Naive thymus-derived CD4-positive, alpha-beta T cell (primary cell): ENCODE measurements at regions of chr19 and their contacts with region 1.

Region 1: GRCh38 chr19:48646001-48646721 is at the start of gene CA11:
- DNase-seq: peak; percentile 89 to 97 (median 93)
- ATAC-seq: peak; percentile 94
- H3K4me3 ChIP-seq: peak within 1 kb of the TSS; percentile 94
- H3K4me3 Mint-ChIP-seq: peak within 1 kb of the TSS; percentile 86 to 99 (median 94)
- H3K27ac ChIP-seq: peak within 1 kb of the TSS; percentile 79
- H3K27ac Mint-ChIP-seq: peak within 1 kb of the TSS; percentile 87 to 98 (median 94)
- H3K4me1 ChIP-seq: peaks cover 21% of the 10 kb centered on the region in 2 donors
- H3K4me1 Mint-ChIP-seq: peaks cover 25 to 60% (median 44%) of the 10 kb centered on the region in 7 donors
- H3K27me3 ChIP-seq: no peaks in the 10 kb centered on the region
- H3K27me3 Mint-ChIP-seq: peaks cover 0 to 8% (median 0%) of the 10 kb centered on the region in 5 donors
- total RNA-seq, gene CA11: 7.5 to 20.5 (median 12.5) TPM

Region 2: GRCh38 chr19:48230555-48231129 is 415.5 kb before region 1 on chr19:
- CTCF ChIA-PET with region 1: no interaction called
- POLR2A ChIA-PET with region 1: no interaction called
- intact Hi-C with region 1: no loop called
- DNase-seq: no peak
- ATAC-seq: peak; percentile 37
- H3K4me3 ChIP-seq: no peak overlapping the region
- H3K4me3 Mint-ChIP-seq: no peak overlapping the region
- H3K27ac ChIP-seq: no peak overlapping the region
- H3K27ac Mint-ChIP-seq: peak overlapping the region in 4 of 9 donors; percentile 4 to 69 (median 54)
- H3K4me1 ChIP-seq: no peaks in the 10 kb centered on the region
- H3K4me1 Mint-ChIP-seq: peaks cover 3 to 23% (median 7%) of the 10 kb centered on the region in 7 donors
- H3K27me3 ChIP-seq: no peaks in the 10 kb centered on the region
- H3K27me3 Mint-ChIP-seq: no peaks in the 10 kb centered on the region

Region 3: DNA sequence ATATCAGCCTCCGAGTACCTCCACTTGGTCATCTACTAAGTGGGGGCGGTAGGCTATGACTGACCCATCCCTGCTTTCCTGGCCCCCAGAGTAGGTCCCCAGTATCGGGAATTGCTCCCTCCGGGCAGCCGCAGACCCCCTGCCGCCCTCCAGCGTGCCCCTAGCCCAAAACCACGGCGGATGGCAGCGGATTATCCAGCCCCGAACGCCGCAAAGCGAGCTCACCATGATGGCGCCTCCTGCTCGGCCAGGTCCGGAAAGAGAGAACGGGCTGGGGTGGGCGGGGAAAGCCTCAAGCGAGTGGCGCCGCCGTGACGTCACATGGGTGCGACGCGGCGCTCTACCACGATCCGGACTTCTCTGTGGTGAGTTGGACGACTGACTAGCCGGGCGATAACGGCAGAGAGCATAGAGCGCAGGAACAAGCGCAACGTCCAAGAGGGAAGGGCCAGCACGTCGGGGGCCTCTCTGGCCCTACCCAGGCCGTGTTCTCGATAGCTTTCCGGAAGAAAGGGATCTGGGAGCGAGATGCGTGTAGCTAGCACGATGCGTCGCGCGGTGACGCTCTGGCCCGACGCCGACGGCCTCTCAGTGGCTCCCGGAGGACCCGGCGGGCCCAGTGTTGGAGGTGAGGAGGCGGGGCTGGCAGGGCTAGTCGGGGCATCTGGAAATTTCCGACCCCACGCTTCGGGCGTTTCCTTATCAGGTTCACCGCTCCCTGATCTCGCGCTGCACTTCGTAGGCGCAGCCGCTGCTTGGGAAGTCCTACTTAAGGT is 27.1 kb before region 1 on chr19 and contains the starts of genes RPL18 and SPHK2:
- CTCF ChIA-PET with region 1: interaction called, 6 read pairs
- POLR2A ChIA-PET with region 1: interaction called, 19 read pairs
- intact Hi-C with region 1: loop called in 1 of 2 experiments (anchors 1 kb)
- DNase-seq: peak; percentile 89 to 97 (median 95)
- ATAC-seq: peak; percentile 89
- H3K4me3 ChIP-seq: peak within 1 kb of the TSS; percentile 96
- H3K4me3 Mint-ChIP-seq: peak within 1 kb of the TSS; percentile 88 to 99 (median 96)
- H3K27ac ChIP-seq: peak within 1 kb of the TSS; percentile 95
- H3K27ac Mint-ChIP-seq: peak within 1 kb of the TSS; percentile 96 to 99 (median 98)
- H3K4me1 ChIP-seq: peaks cover 26 to 45% of the 10 kb centered on the region in 2 donors
- H3K4me1 Mint-ChIP-seq: peaks cover 40 to 64% (median 54%) of the 10 kb centered on the region in 7 donors
- H3K27me3 ChIP-seq: no peaks in the 10 kb centered on the region
- H3K27me3 Mint-ChIP-seq: no peaks in the 10 kb centered on the region
- total RNA-seq, gene RPL18: 1,570 to 2,826 (median 2,745) TPM
- total RNA-seq, gene SPHK2: 20.1 to 34.7 (median 30.5) TPM

Region 4: DNA sequence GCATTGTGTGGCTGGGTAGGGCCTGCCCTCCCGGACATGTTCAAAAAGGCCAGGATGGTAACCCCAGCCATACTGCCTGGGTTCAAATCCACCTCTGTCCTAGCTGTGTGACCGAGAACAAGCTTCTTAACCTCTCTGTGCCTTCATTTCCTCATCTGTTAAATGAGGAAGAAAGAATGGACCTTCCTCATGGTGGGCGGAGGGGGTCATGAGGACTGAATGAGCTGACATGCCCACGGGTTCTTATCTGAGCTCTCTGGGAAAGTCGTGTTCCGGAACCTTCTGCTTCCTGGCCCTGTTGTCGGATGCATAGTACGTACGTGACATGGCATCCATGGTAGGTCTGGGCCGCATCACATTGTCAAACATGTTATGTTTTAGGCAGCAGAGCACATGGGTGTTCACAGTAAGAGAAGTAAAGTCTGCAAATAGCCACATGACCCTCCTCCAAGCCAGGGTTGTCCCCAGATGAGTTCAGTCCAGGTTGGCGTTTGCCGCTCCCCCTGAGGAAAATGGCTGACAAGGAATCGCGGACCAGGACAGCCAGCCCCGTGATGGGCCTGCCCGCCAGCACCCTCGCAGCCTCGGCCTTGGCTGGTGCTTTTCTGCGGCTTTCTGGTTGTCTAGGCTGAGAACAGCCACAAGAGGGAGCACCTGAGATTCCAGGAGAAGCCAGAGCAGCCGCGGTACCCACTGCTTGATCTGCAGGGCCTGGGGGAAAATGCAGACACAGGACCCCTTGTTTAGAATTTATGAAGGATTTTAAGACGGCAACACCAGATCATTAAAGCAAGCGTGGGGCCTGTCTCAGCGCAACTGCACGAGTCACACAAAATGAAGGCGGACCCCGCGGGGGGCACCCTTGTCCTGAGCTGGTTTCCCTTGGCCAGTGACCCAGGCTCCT is 29.0 kb after region 1 on chr19:
- CTCF ChIA-PET with region 1: interaction called, 43 read pairs
- POLR2A ChIA-PET with region 1: interaction called, 14 read pairs
- intact Hi-C with region 1: loop called (anchors 1 kb)
- DNase-seq: peak; percentile 57 to 81 (median 72)
- ATAC-seq: peak; percentile 94
- H3K4me3 ChIP-seq: no peak overlapping the region
- H3K4me3 Mint-ChIP-seq: peak overlapping the region in 1 of 10 donors; percentile 47
- H3K27ac ChIP-seq: no peak overlapping the region
- H3K27ac Mint-ChIP-seq: peak overlapping the region in 7 of 9 donors; percentile 11 to 79 (median 49)
- H3K4me1 ChIP-seq: peaks cover 6 to 7% of the 10 kb centered on the region in 2 donors
- H3K4me1 Mint-ChIP-seq: peaks cover 3 to 8% (median 7%) of the 10 kb centered on the region in 7 donors
- H3K27me3 ChIP-seq: no peaks in the 10 kb centered on the region
- H3K27me3 Mint-ChIP-seq: no peaks in the 10 kb centered on the region

Region 5: GRCh38 chr19:48795055-48795684 is 149.0 kb after region 1 on chr19:
- CTCF ChIA-PET with region 1: interaction called, 9 read pairs
- POLR2A ChIA-PET with region 1: interaction called, 4 read pairs
- intact Hi-C with region 1: loop called in 1 of 2 experiments (anchors 1 kb)
- DNase-seq: peak; percentile 72 to 87 (median 84)
- ATAC-seq: peak; percentile 99
- H3K4me3 ChIP-seq: peak overlapping the region; percentile 96
- H3K4me3 Mint-ChIP-seq: peak overlapping the region; percentile 74 to 99 (median 94)
- H3K27ac ChIP-seq: peak overlapping the region; percentile 67
- H3K27ac Mint-ChIP-seq: peak overlapping the region; percentile 83 to 95 (median 93)
- H3K4me1 ChIP-seq: peaks cover 4 to 6% of the 10 kb centered on the region in 2 donors
- H3K4me1 Mint-ChIP-seq: peaks cover 5 to 13% (median 7%) of the 10 kb centered on the region in 7 donors
- H3K27me3 ChIP-seq: no peaks in the 10 kb centered on the region
- H3K27me3 Mint-ChIP-seq: no peaks in the 10 kb centered on the region

Region 6: GRCh38 chr19:48872182-48872883 is 226.2 kb after region 1 on chr19 and contains the start of gene PPP1R15A:
- CTCF ChIA-PET with region 1: no interaction called
- POLR2A ChIA-PET with region 1: interaction called, 3 read pairs
- intact Hi-C with region 1: loop called in 1 of 2 experiments (anchors 2 kb)
- DNase-seq: peak; percentile 96 to 99 (median 98)
- ATAC-seq: peak; percentile 58
- H3K4me3 ChIP-seq: peak within 1 kb of the TSS; percentile 86
- H3K4me3 Mint-ChIP-seq: peak within 1 kb of the TSS; percentile 94 to 100 (median 98)
- H3K27ac ChIP-seq: peak within 1 kb of the TSS; percentile 99
- H3K27ac Mint-ChIP-seq: peak within 1 kb of the TSS; percentile 94 to 100 (median 99)
- H3K4me1 ChIP-seq: peaks cover 34 to 36% of the 10 kb centered on the region in 2 donors
- H3K4me1 Mint-ChIP-seq: peaks cover 31 to 51% (median 41%) of the 10 kb centered on the region in 7 donors
- H3K27me3 ChIP-seq: no peaks in the 10 kb centered on the region
- H3K27me3 Mint-ChIP-seq: peaks cover 0 to 14% (median 0%) of the 10 kb centered on the region in 5 donors
- total RNA-seq, gene PPP1R15A: 31.5 to 1,030 (median 71.9) TPM

Region 7: DNA sequence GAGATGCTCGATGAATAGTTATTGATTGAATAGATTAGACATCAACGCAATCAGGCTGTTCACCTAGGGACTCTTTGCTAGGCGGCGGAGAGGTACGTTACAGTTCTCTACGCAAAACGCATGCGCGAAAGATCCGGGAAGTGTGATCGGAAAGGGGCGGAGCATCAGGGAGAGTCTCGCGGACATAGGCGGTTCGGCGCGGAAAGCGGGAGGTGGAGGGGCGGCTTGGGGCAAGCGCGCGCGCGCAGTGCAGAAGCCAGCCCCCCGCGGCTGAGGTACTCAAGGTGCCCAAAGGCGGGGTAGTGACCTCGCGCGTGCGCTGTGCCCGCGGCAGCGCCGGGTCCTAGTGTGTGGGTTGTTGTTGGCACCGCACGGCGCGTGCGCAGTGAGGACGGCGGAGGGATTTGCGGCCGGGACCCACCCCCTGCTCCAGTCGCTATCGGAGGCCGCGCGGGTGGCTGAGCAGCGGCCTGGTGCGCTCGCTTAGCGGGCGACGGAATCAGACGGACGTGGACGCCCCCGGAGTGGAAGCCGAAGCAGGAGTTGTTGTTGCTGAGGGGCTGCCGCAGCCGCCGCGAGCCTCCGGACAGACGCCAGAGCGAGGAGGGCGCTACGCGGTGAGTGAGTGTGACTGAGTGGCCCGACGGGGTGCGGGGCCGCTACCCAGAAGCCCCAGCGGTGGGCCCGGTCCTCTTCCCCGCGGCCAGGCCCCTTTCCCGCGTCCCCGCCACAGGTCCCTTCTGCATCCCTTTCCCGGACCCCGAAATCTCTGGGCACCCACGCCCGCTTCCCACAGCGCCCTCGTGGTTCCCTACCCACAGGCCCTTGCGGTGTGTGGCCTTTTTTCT is 439.1 kb after region 1 on chr19 and contains the start of gene SNRNP70:
- CTCF ChIA-PET with region 1: no interaction called
- POLR2A ChIA-PET with region 1: no interaction called
- intact Hi-C with region 1: loop called in 1 of 2 experiments (anchors 5 kb)
- DNase-seq: peak; percentile 99 to 100 (median 100)
- ATAC-seq: peak; percentile 97
- H3K4me3 ChIP-seq: peak within 1 kb of the TSS; percentile 72
- H3K4me3 Mint-ChIP-seq: peak within 1 kb of the TSS; percentile 71 to 97 (median 94)
- H3K27ac ChIP-seq: peak within 1 kb of the TSS; percentile 94
- H3K27ac Mint-ChIP-seq: peak within 1 kb of the TSS; percentile 83 to 96 (median 88)
- H3K4me1 ChIP-seq: peaks cover 19% of the 10 kb centered on the region in 2 donors
- H3K4me1 Mint-ChIP-seq: peaks cover 18 to 49% (median 35%) of the 10 kb centered on the region in 7 donors
- H3K27me3 ChIP-seq: no peaks in the 10 kb centered on the region
- H3K27me3 Mint-ChIP-seq: peaks cover 0 to 5% (median 4%) of the 10 kb centered on the region in 5 donors
- total RNA-seq, gene SNRNP70: 243 to 837 (median 449) TPM